HepG2 (cell line): ENCODE measurements at regions of chr4 and their contacts with region 1.

Region 1: GRCh38 chr4:174389439-174389838 is 105.7 kb downstream of the CEP44 start:
- DNase-seq: no peak
- ATAC-seq: no peak
- H3K4me3 ChIP-seq: no peak overlapping the region
- H3K27ac ChIP-seq: no peak overlapping the region
- H3K4me1 ChIP-seq: no peaks in the 10 kb centered on the region
- H3K27me3 ChIP-seq: no peaks in the 10 kb centered on the region
- CTCF ChIP-seq: no peak
- EP300 ChIP-seq: no peak
- POLR2A ChIP-seq: no peak
- RAD21 ChIP-seq: no peak

Region 2: DNA sequence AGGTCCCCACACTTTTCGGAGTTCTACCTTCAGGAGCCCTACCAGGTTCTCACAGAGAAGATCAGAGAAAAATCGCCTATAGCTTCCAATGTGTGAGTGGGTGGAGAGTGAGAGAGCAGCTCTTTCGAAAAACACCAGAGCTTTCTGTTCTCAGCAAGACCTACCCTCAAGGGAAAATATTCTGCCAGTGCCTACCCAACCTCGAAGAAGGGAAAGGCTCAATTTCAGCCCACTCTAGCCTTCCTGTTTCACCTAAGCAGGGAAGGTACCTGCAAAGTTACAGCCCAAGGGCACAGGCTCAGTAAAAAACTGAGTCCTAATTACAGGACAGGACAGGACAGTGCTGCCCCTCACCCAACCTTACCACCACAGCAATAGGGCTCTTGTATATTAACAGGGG is 1572.2 kb after region 1 on chr4:
- CTCF ChIA-PET with region 1: no interaction called
- POLR2A ChIA-PET with region 1: no interaction called
- in situ Hi-C with region 1: no loop called
- intact Hi-C with region 1: loop called (anchors 10 kb)
- DNase-seq: no peak
- ATAC-seq: no peak
- H3K4me3 ChIP-seq: no peak overlapping the region
- H3K27ac ChIP-seq: no peak overlapping the region
- H3K4me1 ChIP-seq: no peaks in the 10 kb centered on the region
- H3K27me3 ChIP-seq: no peaks in the 10 kb centered on the region
- CTCF ChIP-seq: no peak
- EP300 ChIP-seq: no peak
- POLR2A ChIP-seq: no peak
- RAD21 ChIP-seq: no peak